Gastrocnemius medialis (tissue), 4 donors: ENCODE measurements at regions of chr1 and their contacts with region 1.

Region 1: GRCh38 chr1:89692601-89693521 is 59.9 kb downstream of the LRRC8C start:
- DNase-seq: no peak
- ATAC-seq: peak; percentile 41 to 57
- H3K4me3 ChIP-seq: no peak overlapping the region
- H3K27ac ChIP-seq: peak overlapping the region; percentile 8 to 69 (median 60)
- H3K4me1 ChIP-seq: peaks cover 4 to 33% of the 10 kb centered on the region in 2 donors
- H3K27me3 ChIP-seq: no peaks in the 10 kb centered on the region
- CTCF ChIP-seq: no peak
- POLR2A ChIP-seq: no peak

Region 2: DNA sequence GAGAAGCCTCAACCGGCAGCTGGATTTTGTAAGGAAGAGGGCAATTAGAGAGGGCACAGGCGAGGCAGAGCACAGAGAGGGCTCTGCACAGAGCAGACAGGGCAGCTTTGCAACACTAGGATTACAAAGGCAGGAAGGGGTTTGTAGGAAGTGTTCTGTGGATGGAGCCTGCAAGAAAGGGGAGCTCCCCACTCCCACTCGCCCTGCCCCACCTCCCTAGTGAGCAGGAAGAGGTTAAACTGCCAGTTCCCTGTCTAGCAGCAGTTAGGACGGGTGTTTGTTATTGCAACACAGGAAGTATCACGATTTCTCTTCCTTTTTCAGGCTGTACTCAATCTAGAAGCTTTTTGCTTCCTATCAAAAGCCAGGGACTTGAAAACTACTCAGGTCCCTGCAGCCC is 64.7 kb after region 1 on chr1:
- in situ Hi-C with region 1: no loop called
- intact Hi-C with region 1: loop called (anchors 10 kb)
- DNase-seq: no peak
- ATAC-seq: peak; percentile 27 to 36
- H3K4me3 ChIP-seq: peak overlapping the region in 2 of 4 donors; percentile 4
- H3K27ac ChIP-seq: peak overlapping the region; percentile 25 to 52 (median 44)
- H3K4me1 ChIP-seq: peaks cover 8 to 21% of the 10 kb centered on the region in 2 donors
- H3K27me3 ChIP-seq: no peaks in the 10 kb centered on the region
- CTCF ChIP-seq: no peak
- POLR2A ChIP-seq: no peak